ENCODE measurements at regions of chr7 and their contacts with region 1.

Region 1: DNA sequence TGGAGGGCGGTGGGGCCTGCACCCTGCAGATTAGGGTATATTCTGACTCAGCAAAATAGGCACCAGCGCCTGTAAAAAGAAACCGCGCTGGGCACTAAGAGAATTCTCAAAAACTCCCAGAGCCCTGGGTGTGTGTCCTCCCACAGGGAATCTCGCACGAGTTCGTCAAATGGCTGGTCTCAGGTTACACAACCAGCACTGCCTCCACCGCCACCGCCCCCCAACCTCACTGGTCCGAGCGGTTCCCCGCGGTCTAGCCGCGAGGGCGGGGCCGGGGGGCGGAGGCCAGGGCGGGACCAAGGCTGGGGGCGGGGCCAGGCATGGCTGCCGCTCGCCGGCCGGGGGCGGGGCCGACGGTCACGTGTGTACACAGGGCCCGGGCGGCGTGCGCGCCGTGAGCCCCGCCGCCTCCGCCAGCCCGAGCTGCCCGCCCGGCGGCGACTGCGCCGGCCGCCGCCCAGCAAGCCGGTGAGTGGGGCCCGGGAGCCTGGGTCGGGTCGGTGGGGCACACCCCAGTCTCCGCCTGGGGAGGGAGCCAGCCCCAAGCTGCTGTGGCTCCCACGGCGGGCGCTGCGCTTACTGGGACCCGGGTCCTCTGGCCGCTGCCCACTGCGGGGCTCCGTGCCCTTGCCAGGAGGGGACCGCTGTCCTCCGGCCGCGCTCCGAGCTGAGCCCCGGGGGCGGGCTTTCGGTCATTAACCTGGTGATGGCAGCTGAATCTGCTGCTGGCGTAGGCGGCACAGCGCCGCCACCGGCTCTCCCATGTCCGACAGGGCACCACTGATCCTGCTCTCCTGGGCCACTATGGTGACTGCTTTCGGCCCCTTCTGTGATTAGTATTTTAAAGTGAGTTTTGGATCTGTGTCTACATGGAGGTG is at the start of gene GPR146:
- DNase-seq: peak; percentile 97
- H3K4me3 Mint-ChIP-seq: peak within 1 kb of the TSS; percentile 89
- H3K27ac Mint-ChIP-seq: peak within 1 kb of the TSS; percentile 78
- H3K4me1 Mint-ChIP-seq: peaks cover 57% of the 10 kb centered on the region
- H3K27me3 Mint-ChIP-seq: no peaks in the 10 kb centered on the region
- total RNA-seq, gene GPR146: 2.5 and 4.1 TPM in 2 replicates

Region 2: DNA sequence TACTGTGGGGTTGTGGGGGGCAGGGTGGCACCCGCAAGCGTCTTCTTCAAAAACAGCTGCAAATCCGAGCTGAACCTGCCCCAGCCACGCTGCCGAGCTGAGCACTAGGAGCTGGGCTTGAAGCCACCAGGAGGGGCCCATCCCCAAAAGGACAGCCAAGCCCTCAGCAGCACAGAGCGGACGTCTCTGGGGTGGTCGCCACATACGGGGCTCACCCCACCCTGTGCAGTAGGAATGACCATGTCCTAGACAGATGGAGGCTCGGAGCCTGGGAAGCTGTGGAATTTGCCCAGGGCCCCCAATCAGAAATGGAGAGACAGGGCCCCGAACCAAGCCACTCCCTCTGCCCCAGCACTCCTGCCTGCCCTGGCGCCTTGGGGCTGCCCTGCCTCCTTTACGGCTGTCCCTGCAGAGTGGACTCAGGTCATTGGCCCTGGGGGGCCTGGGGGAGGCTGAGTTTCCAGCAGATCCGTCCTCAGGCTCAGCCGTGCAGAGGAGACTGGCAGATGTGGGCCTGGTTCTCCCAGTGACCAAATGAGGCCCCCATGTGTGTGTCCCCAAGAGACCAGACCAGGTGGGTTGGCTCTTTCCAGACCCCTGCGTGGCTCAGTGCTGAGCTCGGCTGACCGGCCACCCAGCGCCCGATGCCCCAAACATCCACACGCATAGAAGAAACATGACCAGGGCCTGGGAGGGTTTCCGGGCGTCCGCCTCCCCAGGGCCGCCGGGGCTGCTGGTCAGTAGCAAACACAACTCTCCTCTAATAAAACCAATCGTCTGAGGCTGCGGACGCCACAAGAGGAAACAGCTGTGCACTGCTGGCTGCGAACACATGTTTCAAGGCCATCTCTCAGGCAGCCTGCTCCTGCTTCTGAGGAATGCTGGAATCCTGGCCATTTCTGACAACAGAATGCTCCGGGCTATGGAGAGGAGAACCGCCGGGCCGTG is 579.7 kb before region 1 on chr7:
- intact Hi-C with region 1: no loop called
- DNase-seq: no peak
- H3K4me3 Mint-ChIP-seq: no peak overlapping the region
- H3K27ac Mint-ChIP-seq: no peak overlapping the region
- H3K4me1 Mint-ChIP-seq: no peaks in the 10 kb centered on the region
- H3K27me3 Mint-ChIP-seq: no peaks in the 10 kb centered on the region

Region 3: GRCh38 chr7:974820-975681 is 69.4 kb before region 1 on chr7 and contains the start of gene COX19:
- intact Hi-C with region 1: loop called (anchors 2 kb)
- DNase-seq: peak; percentile 96
- H3K4me3 Mint-ChIP-seq: peak within 1 kb of the TSS; percentile 95
- H3K27ac Mint-ChIP-seq: peak within 1 kb of the TSS; percentile 93
- H3K4me1 Mint-ChIP-seq: peaks cover 13% of the 10 kb centered on the region
- H3K27me3 Mint-ChIP-seq: no peaks in the 10 kb centered on the region
- total RNA-seq, gene COX19: 15.3 and 22.4 TPM in 2 replicates

Region 4: DNA sequence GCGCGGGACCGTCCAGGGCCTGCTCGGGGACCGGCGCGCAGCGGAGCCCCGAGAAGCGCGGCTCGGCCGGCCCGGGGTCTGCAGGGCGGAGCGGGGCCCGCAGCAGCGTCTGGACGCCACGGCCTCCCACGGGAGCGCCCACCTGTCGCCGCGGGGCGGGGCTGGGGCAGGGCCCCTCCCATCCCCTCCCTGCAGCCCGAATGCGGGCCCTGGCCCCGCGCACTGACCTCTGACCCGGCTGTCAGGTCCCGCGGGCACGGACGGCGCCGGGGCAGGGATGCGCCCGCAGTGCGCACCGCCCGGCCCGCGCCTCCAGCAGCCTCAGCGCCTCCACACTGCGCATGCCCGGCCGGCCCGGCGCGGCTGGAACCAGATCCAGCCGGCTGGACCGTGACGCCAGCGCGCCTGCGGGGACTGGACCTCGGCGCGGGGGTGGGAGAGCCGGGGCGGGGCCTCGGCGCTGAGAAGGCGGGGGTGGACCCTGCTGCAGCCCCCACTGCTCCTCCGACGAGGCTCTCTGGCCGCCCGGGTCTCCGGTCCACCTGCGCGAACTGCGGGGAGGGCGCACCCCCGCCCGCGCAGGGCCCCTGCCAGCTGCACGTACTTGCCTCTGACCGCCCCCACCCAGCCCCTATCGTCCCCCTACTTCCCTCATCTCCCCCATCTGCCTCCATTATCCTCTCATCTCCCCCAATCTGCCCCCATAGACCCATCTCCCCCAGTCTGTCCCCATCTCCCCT is 16.2 kb before region 1 on chr7:
- intact Hi-C with region 1: loop called (anchors 1 kb)
- DNase-seq: peak; percentile 96
- H3K4me3 Mint-ChIP-seq: peak overlapping the region; percentile 77
- H3K27ac Mint-ChIP-seq: peak overlapping the region; percentile 88
- H3K4me1 Mint-ChIP-seq: peaks cover 17% of the 10 kb centered on the region
- H3K27me3 Mint-ChIP-seq: no peaks in the 10 kb centered on the region

Region 5: GRCh38 chr7:1123715-1124114 is 79.3 kb after region 1 on chr7:
- intact Hi-C with region 1: no loop called
- DNase-seq: no peak
- H3K4me3 Mint-ChIP-seq: no peak overlapping the region
- H3K27ac Mint-ChIP-seq: no peak overlapping the region
- H3K4me1 Mint-ChIP-seq: peaks cover 4% of the 10 kb centered on the region
- H3K27me3 Mint-ChIP-seq: no peaks in the 10 kb centered on the region

Region 6: DNA sequence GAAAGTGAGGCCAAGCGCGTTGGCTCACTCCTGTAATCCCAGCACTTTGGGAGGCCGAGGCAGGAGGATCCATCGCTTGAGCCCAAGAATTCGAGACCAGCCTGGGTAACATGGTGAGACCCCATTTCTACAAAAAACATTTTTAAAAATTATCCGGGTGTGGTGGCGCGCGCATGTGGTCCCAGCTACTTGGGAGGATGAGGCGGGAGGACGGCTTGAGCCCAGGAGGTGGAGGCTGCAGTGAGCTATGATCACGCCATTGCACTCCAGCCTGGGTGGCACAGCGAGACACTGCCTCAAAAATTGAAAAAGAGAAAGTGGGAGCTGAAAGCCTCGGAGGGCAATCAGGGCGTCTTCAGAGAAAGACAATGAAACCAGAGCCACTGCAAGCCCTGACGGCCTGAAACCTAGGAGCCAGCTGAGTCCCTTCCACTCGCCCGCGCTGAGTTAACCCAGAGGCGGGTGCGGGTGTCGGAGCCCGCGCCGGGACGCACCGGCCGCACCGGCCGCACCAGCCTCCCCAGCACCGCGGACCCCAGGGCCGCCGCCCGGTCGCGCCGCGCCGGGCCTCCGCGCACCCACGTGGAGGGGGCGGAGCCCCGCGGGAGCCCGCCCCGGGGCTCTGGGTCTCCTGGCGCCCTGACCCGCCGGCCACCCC is 93.2 kb after region 1 on chr7:
- intact Hi-C with region 1: loop called (anchors 5 kb)
- DNase-seq: no peak
- H3K4me3 Mint-ChIP-seq: peak overlapping the region; percentile 87
- H3K27ac Mint-ChIP-seq: peak overlapping the region; percentile 93
- H3K4me1 Mint-ChIP-seq: peaks cover 10% of the 10 kb centered on the region
- H3K27me3 Mint-ChIP-seq: no peaks in the 10 kb centered on the region

Region 7: DNA sequence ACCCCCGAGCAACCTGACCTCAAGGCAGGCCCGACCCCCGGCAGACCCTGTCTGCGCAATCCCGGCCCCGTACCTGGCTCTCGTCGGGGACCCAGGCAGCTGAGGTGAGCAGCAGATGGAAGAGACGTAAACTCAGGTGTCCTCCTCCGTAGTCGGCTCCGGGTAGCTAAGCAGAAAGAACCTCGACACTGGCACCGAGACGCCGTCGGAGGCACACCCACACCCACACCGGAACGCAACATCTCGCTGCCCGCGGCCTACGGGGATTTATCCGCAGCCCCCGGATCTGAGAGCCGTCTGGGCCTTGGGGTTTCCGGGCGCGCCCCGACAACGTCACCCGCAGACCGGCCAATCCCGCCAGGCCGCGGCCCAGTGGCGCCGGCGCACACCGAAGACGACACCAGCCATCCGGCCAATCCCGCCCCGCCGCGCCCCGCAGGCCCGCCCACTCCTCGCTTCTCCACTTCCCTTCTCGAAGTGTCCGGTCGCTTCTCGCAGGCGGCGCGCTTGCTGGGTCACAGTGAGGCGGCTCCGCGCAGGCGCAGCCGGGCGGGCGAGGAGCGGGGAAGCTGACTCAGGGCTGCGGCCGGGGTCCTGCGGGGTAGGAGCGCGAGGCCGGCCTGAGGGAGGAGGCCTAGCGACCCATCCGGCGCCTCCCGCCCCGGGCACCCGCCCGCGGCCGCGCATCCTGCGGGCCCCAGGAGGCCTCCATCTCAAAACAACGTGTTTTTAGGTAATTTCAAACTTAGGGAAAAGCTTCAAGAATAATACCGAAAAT is 115.7 kb after region 1 on chr7 and contains the start of gene ZFAND2A:
- intact Hi-C with region 1: loop called (anchors 2 kb)
- DNase-seq: peak; percentile 100
- H3K4me3 Mint-ChIP-seq: peak within 1 kb of the TSS; percentile 93
- H3K27ac Mint-ChIP-seq: peak within 1 kb of the TSS; percentile 89
- H3K4me1 Mint-ChIP-seq: peaks cover 18% of the 10 kb centered on the region
- H3K27me3 Mint-ChIP-seq: no peaks in the 10 kb centered on the region
- total RNA-seq, gene ZFAND2A: 19.9 and 24.2 TPM in 2 replicates

Measured in activated CD4-positive, alpha-beta T cell treated with anti-CD3 and anti-CD28 coated beads, Interleukin-2, amount 10 ng/mL, durations not matched to agents 24 days and 14 days (primary cell).